OCI-LY7 (cell line): ENCODE measurements at regions of chr12 and their contacts with region 1.

Region 1: GRCh38 chr12:49866859-49867579 is 24.1 kb upstream of the BCDIN3D start:
- DNase-seq: peak; percentile 77
- H3K4me3 ChIP-seq: no peak overlapping the region
- H3K27ac ChIP-seq: no peak overlapping the region
- H3K4me1 ChIP-seq: no peaks in the 10 kb centered on the region
- CTCF ChIP-seq: peak; percentile 93

Region 2: GRCh38 chr12:49557917-49558215 is 309.2 kb before region 1 on chr12:
- CTCF ChIA-PET with region 1: no interaction called
- POLR2A ChIA-PET with region 1: no interaction called
- intact Hi-C with region 1: no loop called
- DNase-seq: no peak
- H3K4me3 ChIP-seq: no peak overlapping the region
- H3K27ac ChIP-seq: no peak overlapping the region
- H3K4me1 ChIP-seq: peaks cover 8% of the 10 kb centered on the region
- CTCF ChIP-seq: peak; percentile 53

Region 3: DNA sequence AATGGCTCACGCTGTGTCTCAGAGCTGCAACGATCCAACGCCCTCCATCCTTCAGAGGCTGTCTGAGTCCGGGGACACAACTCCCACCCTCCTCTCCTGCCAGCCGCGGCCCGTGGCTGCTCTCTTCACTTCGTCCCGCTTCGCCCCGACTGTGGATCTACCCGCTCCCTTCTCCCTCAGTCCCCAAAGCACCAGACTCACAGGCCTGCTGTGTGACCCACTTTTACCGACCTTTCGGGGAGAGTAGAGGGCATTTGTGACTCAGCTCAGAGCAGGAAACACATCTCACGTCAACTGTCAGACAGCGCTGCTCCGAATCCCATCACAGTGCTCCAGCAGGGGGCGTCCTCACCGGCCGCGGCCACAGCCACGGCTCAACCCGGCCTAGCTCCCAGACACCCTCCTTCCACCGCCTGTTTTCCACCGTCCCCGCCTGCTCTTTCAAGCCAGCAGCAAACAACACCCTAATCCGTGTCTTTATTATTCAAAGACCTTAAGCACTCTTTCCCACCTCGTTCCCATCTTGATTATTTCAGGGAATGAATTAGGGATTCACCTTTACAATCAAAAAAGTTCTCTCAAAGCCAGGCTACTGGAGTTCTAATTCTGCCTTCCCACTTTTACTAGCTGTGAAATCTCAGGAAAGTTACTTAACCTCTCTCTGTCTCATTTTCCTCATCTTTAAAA is 78.5 kb after region 1 on chr12:
- CTCF ChIA-PET with region 1: interaction called, 3 read pairs
- POLR2A ChIA-PET with region 1: no interaction called
- intact Hi-C with region 1: loop called (anchors 10 kb)
- DNase-seq: peak; percentile 75
- H3K4me3 ChIP-seq: peak overlapping the region; percentile 24
- H3K27ac ChIP-seq: no peak overlapping the region
- H3K4me1 ChIP-seq: peaks cover 20% of the 10 kb centered on the region
- CTCF ChIP-seq: peak; percentile 88